CD8-positive, alpha-beta T cell (primary cell): ENCODE measurements at regions of chr2 and their contacts with region 1.

Region 1: DNA sequence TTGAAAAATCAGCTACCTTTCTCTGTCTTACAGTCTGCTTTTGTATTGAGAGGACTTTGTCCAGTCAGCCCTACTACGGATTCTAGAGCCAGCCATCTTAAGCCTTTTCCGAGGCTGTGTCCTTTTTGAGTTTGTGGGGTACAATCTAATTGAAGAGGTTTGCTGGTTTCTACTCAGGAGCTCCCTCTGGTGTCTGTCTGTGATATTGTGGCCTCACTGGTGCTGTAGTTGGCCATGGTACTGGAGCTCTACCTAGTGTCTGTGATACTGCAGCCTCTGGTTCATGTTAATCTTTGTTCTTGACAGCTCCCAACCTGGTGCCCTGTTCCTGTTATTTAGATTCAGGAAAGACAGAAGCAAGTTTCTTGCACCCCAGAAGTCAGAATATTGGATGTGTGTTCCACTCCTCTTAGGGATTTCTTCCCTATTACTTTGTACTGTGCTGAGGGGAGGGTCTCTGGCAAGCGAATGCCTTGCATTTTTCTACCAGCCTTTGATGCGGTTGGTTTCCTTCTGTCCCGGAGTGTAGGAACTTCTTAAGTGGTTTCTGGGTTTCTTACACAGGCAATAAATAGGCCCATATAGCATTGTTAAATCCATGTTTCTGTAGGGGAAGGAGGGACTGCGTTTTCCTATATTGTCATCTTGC is 78.5 kb downstream of the ACSL3 start:
- DNase-seq: peak; percentile 21 to 69 (median 51)
- ATAC-seq: peak; percentile 79
- H3K4me3 ChIP-seq: no peak overlapping the region
- H3K4me3 Mint-ChIP-seq: no peak overlapping the region
- H3K27ac ChIP-seq: no peak overlapping the region
- H3K27ac Mint-ChIP-seq: no peak overlapping the region
- H3K4me1 ChIP-seq: no peaks in the 10 kb centered on the region
- H3K4me1 Mint-ChIP-seq: no peaks in the 10 kb centered on the region
- H3K27me3 ChIP-seq: no peaks in the 10 kb centered on the region
- H3K27me3 Mint-ChIP-seq: no peaks in the 10 kb centered on the region
- CTCF ChIP-seq: peak; percentile 72

Region 2: GRCh38 chr2:222707689-222708525 is 231.4 kb before region 1 on chr2:
- CTCF ChIA-PET with region 1: interaction called, 4 read pairs
- POLR2A ChIA-PET with region 1: no interaction called
- intact Hi-C with region 1: loop called in 1 of 2 experiments (anchors 1 kb)
- DNase-seq: peak; percentile 49 to 85 (median 71)
- ATAC-seq: peak; percentile 71
- H3K4me3 ChIP-seq: no peak overlapping the region
- H3K4me3 Mint-ChIP-seq: no peak overlapping the region
- H3K27ac ChIP-seq: no peak overlapping the region
- H3K27ac Mint-ChIP-seq: no peak overlapping the region
- H3K4me1 ChIP-seq: no peaks in the 10 kb centered on the region
- H3K4me1 Mint-ChIP-seq: no peaks in the 10 kb centered on the region
- H3K27me3 ChIP-seq: peaks cover 2 to 3% of the 10 kb centered on the region in 2 experiments
- H3K27me3 Mint-ChIP-seq: peaks cover 29% of the 10 kb centered on the region
- CTCF ChIP-seq: peak; percentile 99